Naive thymus-derived CD4-positive, alpha-beta T cell (primary cell): ENCODE measurements at regions of chr13 and their contacts with region 1.

Region 1: GRCh38 chr13:27878274-27878673 is 41.5 kb upstream of the PDX1 start:
- DNase-seq: no peak
- ATAC-seq: no peak
- H3K4me3 ChIP-seq: no peak overlapping the region
- H3K4me3 Mint-ChIP-seq: no peak overlapping the region
- H3K27ac ChIP-seq: no peak overlapping the region
- H3K27ac Mint-ChIP-seq: no peak overlapping the region
- H3K4me1 ChIP-seq: no peaks in the 10 kb centered on the region
- H3K4me1 Mint-ChIP-seq: no peaks in the 10 kb centered on the region
- H3K27me3 ChIP-seq: no peaks in the 10 kb centered on the region
- H3K27me3 Mint-ChIP-seq: peaks cover 33 to 77% (median 69%) of the 10 kb centered on the region in 5 donors

Region 2: GRCh38 chr13:27619728-27620376 is 258.4 kb before region 1 on chr13:
- CTCF ChIA-PET with region 1: no interaction called
- POLR2A ChIA-PET with region 1: no interaction called
- intact Hi-C with region 1: no loop called
- DNase-seq: peak in 8 of 9 donors; percentile 6 to 62 (median 45)
- ATAC-seq: peak; percentile 28
- H3K4me3 ChIP-seq: peak overlapping the region; percentile 95
- H3K4me3 Mint-ChIP-seq: peak overlapping the region; percentile 86 to 96 (median 95)
- H3K27ac ChIP-seq: peak overlapping the region; percentile 97
- H3K27ac Mint-ChIP-seq: peak overlapping the region; percentile 35 to 96 (median 89)
- H3K4me1 ChIP-seq: peaks cover 32 to 33% of the 10 kb centered on the region in 2 donors
- H3K4me1 Mint-ChIP-seq: peaks cover 36 to 67% (median 60%) of the 10 kb centered on the region in 7 donors
- H3K27me3 ChIP-seq: no peaks in the 10 kb centered on the region
- H3K27me3 Mint-ChIP-seq: no peaks in the 10 kb centered on the region

Region 3: GRCh38 chr13:27905650-27906049 is 27.4 kb after region 1 on chr13:
- CTCF ChIA-PET with region 1: no interaction called
- POLR2A ChIA-PET with region 1: no interaction called
- intact Hi-C with region 1: loop called in 1 of 2 experiments (anchors 1 kb)
- DNase-seq: no peak
- ATAC-seq: no peak
- H3K4me3 ChIP-seq: no peak overlapping the region
- H3K4me3 Mint-ChIP-seq: no peak overlapping the region
- H3K27ac ChIP-seq: no peak overlapping the region
- H3K27ac Mint-ChIP-seq: no peak overlapping the region
- H3K4me1 ChIP-seq: no peaks in the 10 kb centered on the region
- H3K4me1 Mint-ChIP-seq: no peaks in the 10 kb centered on the region
- H3K27me3 ChIP-seq: no peaks in the 10 kb centered on the region
- H3K27me3 Mint-ChIP-seq: peaks cover 29 to 84% (median 73%) of the 10 kb centered on the region in 5 donors

Region 4: DNA sequence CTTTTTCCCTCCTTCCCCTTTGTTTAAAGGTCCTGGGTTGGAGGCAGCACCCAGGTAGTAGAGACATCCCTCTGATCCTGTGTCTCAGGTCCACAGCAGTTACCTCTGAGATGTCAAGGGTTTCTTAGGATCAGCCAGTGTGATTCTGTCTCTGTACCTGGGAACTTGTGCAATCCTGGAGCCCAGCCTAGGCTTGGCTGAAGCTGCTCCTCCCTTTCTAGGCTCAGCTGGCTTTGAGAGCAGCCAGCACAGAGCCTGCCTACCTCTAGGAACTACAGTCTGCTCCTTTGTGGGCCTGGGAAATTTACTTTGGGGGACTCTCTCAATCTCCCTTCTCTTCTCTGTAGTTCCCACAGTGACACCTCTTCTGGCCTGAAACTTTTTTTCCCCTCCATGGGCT is 1113.5 kb after region 1 on chr13:
- CTCF ChIA-PET with region 1: no interaction called
- POLR2A ChIA-PET with region 1: no interaction called
- intact Hi-C with region 1: no loop called
- DNase-seq: no peak
- ATAC-seq: no peak
- H3K4me3 ChIP-seq: no peak overlapping the region
- H3K4me3 Mint-ChIP-seq: no peak overlapping the region
- H3K27ac ChIP-seq: no peak overlapping the region
- H3K27ac Mint-ChIP-seq: peak overlapping the region in 1 of 9 donors; percentile 39
- H3K4me1 ChIP-seq: no peaks in the 10 kb centered on the region
- H3K4me1 Mint-ChIP-seq: no peaks in the 10 kb centered on the region
- H3K27me3 ChIP-seq: no peaks in the 10 kb centered on the region
- H3K27me3 Mint-ChIP-seq: peaks cover 0 to 6% (median 0%) of the 10 kb centered on the region in 5 donors